IMR-90 (cell line): ENCODE measurements at regions of chr5 and their contacts with region 1.

Region 1: DNA sequence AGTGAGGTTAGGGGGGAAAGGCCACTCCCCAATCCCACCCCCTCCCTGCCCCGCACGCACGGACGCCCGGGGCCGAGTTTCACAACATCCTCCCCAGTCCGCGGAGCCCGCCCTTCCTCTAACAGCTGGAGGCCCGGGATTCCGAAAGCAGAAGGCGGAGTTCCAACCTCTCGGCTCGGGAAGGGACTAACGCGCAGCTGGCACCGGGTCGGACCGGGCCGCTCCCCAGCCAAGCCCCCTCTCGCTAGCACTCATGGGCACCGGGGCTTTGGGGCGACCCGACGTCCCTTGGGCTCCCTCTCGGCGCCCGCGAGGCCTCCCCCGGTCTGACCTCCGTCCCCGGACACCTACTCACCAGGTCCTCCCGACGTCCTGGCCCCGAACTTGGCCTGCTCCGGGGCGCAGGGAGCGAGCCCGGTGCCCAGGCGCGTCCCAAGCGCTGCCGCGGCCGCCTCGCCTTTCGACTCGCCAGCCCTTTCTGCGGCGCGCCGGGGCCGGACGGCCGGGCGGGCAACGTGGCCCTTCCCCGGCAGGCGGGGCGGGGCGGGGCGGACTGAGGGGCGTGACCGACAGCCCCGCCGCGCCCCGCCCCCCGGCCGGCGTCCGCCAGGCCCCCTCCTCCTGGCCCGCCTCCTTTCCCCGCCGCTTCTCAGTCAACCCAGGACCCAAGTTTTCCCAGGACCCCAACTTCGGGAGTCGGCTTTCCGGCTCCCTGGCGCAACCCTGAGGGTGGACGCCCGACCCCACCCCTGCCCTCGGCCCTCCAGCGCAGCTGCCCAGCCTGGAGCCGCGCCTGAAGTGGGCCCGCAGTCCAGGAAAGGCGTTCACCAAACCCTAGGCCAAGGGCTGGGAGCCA is at the start of gene MGAT1:
- DNase-seq: peak; percentile 83
- ATAC-seq: peak; percentile 88
- H3K4me3 ChIP-seq: peak within 1 kb of the TSS; percentile 96
- H3K27ac ChIP-seq: peak within 1 kb of the TSS; percentile 99
- H3K4me1 ChIP-seq: peaks cover 37% of the 10 kb centered on the region
- H3K27me3 ChIP-seq: no peaks in the 10 kb centered on the region
- CTCF ChIP-seq: no peak
- POLR2A ChIP-seq: peak; percentile 96
- RAD21 ChIP-seq: no peak
- total RNA-seq, gene MGAT1: 56.3 and 62.2 TPM in 2 replicates

Region 2: GRCh38 chr5:180486636-180487149 is 315.9 kb before region 1 on chr5:
- CTCF ChIA-PET with region 1: no interaction called
- POLR2A ChIA-PET with region 1: no interaction called
- dilution Hi-C with region 1: no loop called
- in situ Hi-C with region 1: no loop called
- intact Hi-C with region 1: no loop called
- DNase-seq: no peak
- ATAC-seq: no peak
- H3K4me3 ChIP-seq: no peak overlapping the region
- H3K27ac ChIP-seq: no peak overlapping the region
- H3K4me1 ChIP-seq: no peaks in the 10 kb centered on the region
- H3K27me3 ChIP-seq: no peaks in the 10 kb centered on the region
- CTCF ChIP-seq: no peak
- POLR2A ChIP-seq: no peak
- RAD21 ChIP-seq: no peak

Region 3: GRCh38 chr5:180860887-180861822 is 58.6 kb after region 1 on chr5 and contains the start of gene ZFP62:
- CTCF ChIA-PET with region 1: interaction called, 3 read pairs
- POLR2A ChIA-PET with region 1: no interaction called
- dilution Hi-C with region 1: no loop called
- in situ Hi-C with region 1: no loop called
- intact Hi-C with region 1: loop called (anchors 5 kb)
- DNase-seq: peak; percentile 87
- ATAC-seq: peak; percentile 97
- H3K4me3 ChIP-seq: peak within 1 kb of the TSS; percentile 96
- H3K27ac ChIP-seq: peak within 1 kb of the TSS; percentile 95
- H3K4me1 ChIP-seq: no peaks in the 10 kb centered on the region
- H3K27me3 ChIP-seq: no peaks in the 10 kb centered on the region
- CTCF ChIP-seq: no peak
- POLR2A ChIP-seq: peak; percentile 43; the same call in 1 of the 2 replicates
- RAD21 ChIP-seq: no peak
- total RNA-seq, gene ZFP62: 20.3 and 29.7 TPM in 2 replicates